ENCODE measurements at regions of chr1 and their contacts with region 1.

Region 1: DNA sequence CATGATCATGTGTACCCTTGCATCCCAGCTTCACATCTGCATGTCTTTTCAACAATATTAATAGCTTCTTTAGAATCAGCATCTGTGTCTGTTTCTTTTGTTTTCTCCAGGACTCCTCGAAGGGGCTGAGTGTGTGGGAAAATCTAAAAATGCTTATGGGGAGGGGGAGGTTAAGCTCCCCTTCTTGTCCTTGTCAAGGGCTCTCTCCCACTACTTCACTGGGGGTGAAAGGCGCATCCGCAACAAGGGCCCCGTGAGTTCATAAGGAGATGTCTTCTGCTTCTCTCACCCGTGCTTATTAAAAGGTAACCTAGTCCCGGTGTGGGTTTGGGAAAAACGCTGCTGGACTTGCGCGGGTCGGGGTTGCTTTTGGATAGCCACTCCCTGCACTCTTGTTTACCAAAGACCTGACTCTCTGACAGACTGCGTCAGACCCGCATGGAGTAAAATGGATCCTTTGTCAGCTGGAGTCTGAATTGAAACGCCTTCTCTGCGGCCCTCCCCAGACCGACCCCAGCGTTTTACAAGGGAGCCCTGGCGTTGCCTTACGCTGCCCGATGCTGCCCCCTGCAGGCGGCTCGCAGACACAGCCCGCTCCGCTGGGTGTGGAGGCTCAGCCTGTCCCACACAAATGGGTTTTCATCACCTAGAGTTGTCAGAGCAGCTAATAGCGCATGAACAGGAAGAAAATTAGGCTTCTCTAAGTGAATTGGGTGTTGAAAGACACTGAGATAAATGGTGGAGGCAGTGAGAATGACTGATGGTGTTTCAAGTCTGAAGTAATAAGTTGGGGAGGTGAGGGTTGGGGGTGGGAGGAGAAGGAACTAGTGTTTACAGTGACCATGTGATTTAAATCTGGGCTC is 53.8 kb downstream of the IER5 start:
- DNase-seq: peak; percentile 78 to 84 (median 81)
- H3K4me3 ChIP-seq: no peak overlapping the region
- H3K4me3 Mint-ChIP-seq: peak overlapping the region in 4 of 8 donors; percentile 4 to 26 (median 14)
- H3K27ac ChIP-seq: no peak overlapping the region
- H3K27ac Mint-ChIP-seq: peak overlapping the region in 4 of 7 donors; percentile 1 to 61 (median 33)
- H3K4me1 ChIP-seq: peaks cover 42% of the 10 kb centered on the region
- H3K4me1 Mint-ChIP-seq: peaks cover 19 to 51% (median 34%) of the 10 kb centered on the region in 4 donors
- H3K27me3 ChIP-seq: no peaks in the 10 kb centered on the region
- H3K27me3 Mint-ChIP-seq: peaks cover 0 to 2% of the 10 kb centered on the region in 2 donors

Region 2: GRCh38 chr1:180515864-180516388 is 626.4 kb before region 1 on chr1:
- CTCF ChIA-PET with region 1: interaction called, 5 read pairs
- POLR2A ChIA-PET with region 1: no interaction called
- intact Hi-C with region 1: loop called (anchors 5 kb)
- DNase-seq: peak; percentile 48 to 62 (median 55)
- H3K4me3 ChIP-seq: no peak overlapping the region
- H3K4me3 Mint-ChIP-seq: no peak overlapping the region
- H3K27ac ChIP-seq: no peak overlapping the region
- H3K27ac Mint-ChIP-seq: no peak overlapping the region
- H3K4me1 ChIP-seq: peaks cover 3% of the 10 kb centered on the region
- H3K4me1 Mint-ChIP-seq: peaks cover 0 to 2% (median 1%) of the 10 kb centered on the region in 4 donors
- H3K27me3 ChIP-seq: no peaks in the 10 kb centered on the region
- H3K27me3 Mint-ChIP-seq: peaks cover 4% of the 10 kb centered on the region in 2 donors

Region 3: DNA sequence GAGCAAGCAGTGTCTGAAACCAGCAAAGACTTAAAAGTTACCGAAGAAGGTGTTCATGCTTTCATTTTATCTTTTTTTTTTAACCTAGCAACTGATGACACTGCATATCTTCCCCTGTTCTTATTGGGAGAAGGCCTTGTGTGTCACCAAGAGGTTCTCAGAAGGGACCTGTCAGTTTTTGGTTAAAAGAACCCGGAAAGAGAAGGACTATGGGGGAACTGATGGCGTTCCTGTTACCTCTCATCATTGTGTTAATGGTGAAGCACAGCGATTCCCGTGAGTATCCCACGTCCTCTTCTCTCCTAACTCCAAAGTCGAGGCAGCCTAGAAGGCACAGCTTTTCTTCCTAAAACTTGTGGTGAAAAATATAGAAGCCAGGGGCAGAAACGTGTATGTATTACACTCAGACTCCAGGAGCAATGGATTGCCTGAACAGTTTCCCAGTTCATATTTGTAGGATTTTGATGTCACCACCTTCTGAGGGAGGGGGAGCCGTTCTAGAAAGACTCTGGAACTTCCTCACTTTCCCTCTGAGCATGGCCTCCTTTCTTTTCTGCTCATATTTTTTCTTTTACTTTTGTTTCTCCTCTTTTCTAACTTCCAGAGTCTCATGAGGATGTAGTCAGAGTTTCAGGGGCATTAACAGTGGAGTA is 108.4 kb before region 1 on chr1 and contains the start of gene MR1:
- CTCF ChIA-PET with region 1: interaction called, 99 read pairs
- POLR2A ChIA-PET with region 1: interaction called, 25 read pairs
- intact Hi-C with region 1: loop called (anchors 1 kb)
- DNase-seq: peak; percentile 72 to 91 (median 87)
- H3K4me3 ChIP-seq: peak within 1 kb of the TSS; percentile 63 to 72
- H3K4me3 Mint-ChIP-seq: peak within 1 kb of the TSS; percentile 93 to 99 (median 98)
- H3K27ac ChIP-seq: peak within 1 kb of the TSS; percentile 92
- H3K27ac Mint-ChIP-seq: peak within 1 kb of the TSS; percentile 95 to 100 (median 99)
- H3K4me1 ChIP-seq: peaks cover 56% of the 10 kb centered on the region
- H3K4me1 Mint-ChIP-seq: peaks cover 47 to 64% (median 54%) of the 10 kb centered on the region in 4 donors
- H3K27me3 ChIP-seq: no peaks in the 10 kb centered on the region
- H3K27me3 Mint-ChIP-seq: no peaks in the 10 kb centered on the region
- total RNA-seq, gene MR1: 31.8 to 33.2 TPM

Region 4: DNA sequence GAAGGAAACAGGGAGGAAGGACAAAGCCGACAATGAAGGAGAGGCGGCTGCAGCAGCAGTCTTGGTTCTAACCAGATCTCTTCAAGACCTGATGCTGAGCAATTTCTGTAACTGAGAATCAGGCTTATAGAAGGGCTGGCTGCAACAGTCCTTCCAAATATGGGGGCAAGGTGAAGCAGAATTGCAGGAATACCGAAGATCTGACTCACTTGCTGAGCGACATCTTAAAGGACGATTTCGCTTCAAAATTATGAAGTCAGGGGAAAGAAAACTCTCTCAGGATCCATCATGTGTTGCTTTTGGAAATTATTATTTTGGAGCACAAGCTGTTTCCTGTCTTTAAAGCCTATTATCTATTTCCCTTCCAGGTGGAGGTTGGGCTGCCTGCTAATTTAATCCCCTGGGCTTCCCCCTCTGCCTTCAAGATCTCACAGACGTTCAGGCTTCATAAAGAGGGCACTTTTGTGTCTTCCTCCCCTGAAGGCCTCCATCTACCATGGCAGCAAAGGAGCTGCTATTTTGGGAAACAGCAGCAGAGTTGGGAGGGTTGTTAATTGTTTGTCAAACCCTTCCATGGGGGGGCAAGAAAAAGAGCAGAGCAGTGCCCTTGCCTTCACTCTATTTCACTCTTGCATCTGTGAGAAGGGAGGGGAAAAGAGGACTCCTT is 64.6 kb before region 1 on chr1:
- CTCF ChIA-PET with region 1: interaction called, 311 read pairs
- POLR2A ChIA-PET with region 1: interaction called, 4 read pairs
- intact Hi-C with region 1: no loop called
- DNase-seq: no peak
- H3K4me3 ChIP-seq: no peak overlapping the region
- H3K4me3 Mint-ChIP-seq: no peak overlapping the region
- H3K27ac ChIP-seq: no peak overlapping the region
- H3K27ac Mint-ChIP-seq: no peak overlapping the region
- H3K4me1 ChIP-seq: no peaks in the 10 kb centered on the region
- H3K4me1 Mint-ChIP-seq: no peaks in the 10 kb centered on the region
- H3K27me3 ChIP-seq: no peaks in the 10 kb centered on the region
- H3K27me3 Mint-ChIP-seq: peaks cover 10 to 13% of the 10 kb centered on the region in 2 donors

Region 5: DNA sequence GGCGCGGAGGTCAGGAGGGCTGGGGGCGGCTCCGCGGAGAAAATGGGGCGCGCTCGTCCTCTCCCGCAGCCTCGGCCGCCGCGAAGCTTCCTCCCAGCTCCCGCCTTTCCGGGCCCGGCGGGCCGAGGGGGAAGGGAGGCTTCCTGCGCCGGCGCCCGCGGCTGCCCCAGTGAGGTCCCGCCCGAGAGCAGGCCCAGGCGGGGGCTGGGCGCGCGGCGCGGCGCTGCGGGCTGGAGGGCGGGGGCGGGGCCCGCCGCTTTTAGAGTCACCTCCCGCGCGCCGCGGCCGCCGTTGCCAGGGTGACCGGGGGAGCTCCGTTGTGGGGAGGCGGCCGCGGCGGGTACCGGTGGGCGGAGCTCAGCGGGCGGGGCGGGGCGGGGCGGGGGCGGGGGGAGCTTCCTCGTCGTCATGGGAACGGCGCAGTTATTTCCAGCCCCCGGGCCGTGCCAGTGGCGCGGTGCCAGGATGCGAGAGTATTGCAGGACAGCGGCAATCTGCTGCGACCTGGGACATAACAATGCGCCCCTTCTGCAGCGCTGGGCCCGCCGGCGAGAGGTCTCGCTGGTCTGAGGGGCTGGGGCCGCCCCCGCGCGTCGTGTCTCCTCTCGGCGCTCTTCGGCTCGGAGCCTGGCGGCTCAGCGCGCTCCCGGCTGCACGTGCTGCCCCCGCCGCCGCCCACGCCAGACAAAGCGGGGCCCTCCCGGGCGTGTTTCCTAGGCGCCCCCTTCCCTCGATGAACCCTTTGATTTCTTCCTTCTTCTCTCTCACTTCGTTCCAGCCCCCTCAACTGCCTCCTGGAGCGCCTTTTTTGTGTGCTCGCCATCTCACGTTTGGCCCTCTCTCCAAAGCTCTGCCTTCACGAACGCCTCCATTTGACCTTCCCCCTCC is 36.9 kb before region 1 on chr1:
- CTCF ChIA-PET with region 1: interaction called, 38 read pairs
- POLR2A ChIA-PET with region 1: interaction called, 31 read pairs
- intact Hi-C with region 1: loop called (anchors 2 kb)
- DNase-seq: peak; percentile 90 to 94 (median 91)
- H3K4me3 ChIP-seq: peak overlapping the region in 1 of 2 donors; percentile 76
- H3K4me3 Mint-ChIP-seq: peak overlapping the region; percentile 87 to 97 (median 90)
- H3K27ac ChIP-seq: peak overlapping the region; percentile 79
- H3K27ac Mint-ChIP-seq: peak overlapping the region; percentile 92 to 98 (median 96)
- H3K4me1 ChIP-seq: peaks cover 56% of the 10 kb centered on the region
- H3K4me1 Mint-ChIP-seq: peaks cover 33 to 71% (median 50%) of the 10 kb centered on the region in 4 donors
- H3K27me3 ChIP-seq: no peaks in the 10 kb centered on the region
- H3K27me3 Mint-ChIP-seq: no peaks in the 10 kb centered on the region

Region 6: DNA sequence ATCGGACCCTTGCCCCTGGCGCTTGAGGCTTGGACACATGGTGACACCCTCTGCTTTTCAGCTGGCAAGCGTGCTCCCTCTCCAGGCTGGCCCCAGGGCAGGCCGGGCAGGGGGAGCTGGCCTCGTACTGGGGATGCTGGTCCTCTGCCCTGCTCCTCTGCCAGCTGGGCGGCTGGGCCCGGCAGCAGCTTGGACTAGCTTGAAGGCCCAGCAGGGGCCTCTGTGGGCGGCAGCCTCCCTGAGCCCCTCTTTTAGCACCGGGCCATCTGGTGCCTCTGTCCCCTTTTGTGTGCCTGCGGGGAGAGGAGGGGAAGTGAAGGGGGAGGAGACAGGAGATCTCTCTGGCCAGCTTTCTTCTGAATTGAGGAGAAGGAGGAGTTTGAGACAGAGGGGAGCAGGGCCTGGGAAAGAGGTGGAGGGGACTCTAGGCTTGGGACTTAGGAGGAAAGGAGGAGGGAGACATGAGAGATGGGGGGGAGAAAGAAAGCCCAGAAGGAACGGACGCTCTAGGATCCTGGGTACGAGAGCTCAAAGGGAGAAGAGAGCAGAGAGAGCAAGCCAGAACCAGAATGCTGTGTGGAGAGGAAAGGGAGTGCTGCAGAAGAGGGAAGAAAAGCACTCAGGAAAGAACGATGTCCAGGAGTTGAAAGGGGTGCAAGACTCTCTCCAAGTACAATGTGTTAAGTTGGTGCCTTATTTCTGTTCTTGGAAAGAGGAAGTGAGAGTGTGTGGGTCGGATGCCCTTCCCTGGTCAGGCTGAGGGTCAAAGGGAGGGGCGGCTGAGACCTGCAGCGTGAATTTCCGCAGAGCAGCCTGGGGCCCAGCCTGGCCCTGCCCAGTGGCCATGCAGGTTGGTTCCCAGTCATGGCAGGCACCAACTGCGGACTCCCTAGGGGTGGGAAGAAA is 13.5 kb before region 1 on chr1:
- CTCF ChIA-PET with region 1: interaction called, 14 read pairs
- POLR2A ChIA-PET with region 1: no interaction called
- intact Hi-C with region 1: no loop called
- DNase-seq: no peak
- H3K4me3 ChIP-seq: no peak overlapping the region
- H3K4me3 Mint-ChIP-seq: no peak overlapping the region
- H3K27ac ChIP-seq: no peak overlapping the region
- H3K27ac Mint-ChIP-seq: no peak overlapping the region
- H3K4me1 ChIP-seq: peaks cover 2% of the 10 kb centered on the region
- H3K4me1 Mint-ChIP-seq: peaks cover 0 to 6% (median 3%) of the 10 kb centered on the region in 4 donors
- H3K27me3 ChIP-seq: no peaks in the 10 kb centered on the region
- H3K27me3 Mint-ChIP-seq: peaks cover 0 to 2% of the 10 kb centered on the region in 2 donors

Region 7: GRCh38 chr1:181397845-181398244 is 255.5 kb after region 1 on chr1:
- CTCF ChIA-PET with region 1: no interaction called
- POLR2A ChIA-PET with region 1: no interaction called
- intact Hi-C with region 1: no loop called
- DNase-seq: peak; percentile 41 to 56 (median 50)
- H3K4me3 ChIP-seq: peak overlapping the region; percentile 13 to 25
- H3K4me3 Mint-ChIP-seq: peak overlapping the region; percentile 65 to 86 (median 74)
- H3K27ac ChIP-seq: peak overlapping the region; percentile 37
- H3K27ac Mint-ChIP-seq: peak overlapping the region in 5 of 7 donors; percentile 78 to 97 (median 95)
- H3K4me1 ChIP-seq: peaks cover 64% of the 10 kb centered on the region
- H3K4me1 Mint-ChIP-seq: peaks cover 9 to 35% (median 29%) of the 10 kb centered on the region in 4 donors
- H3K27me3 ChIP-seq: no peaks in the 10 kb centered on the region
- H3K27me3 Mint-ChIP-seq: no peaks in the 10 kb centered on the region

Region 8: DNA sequence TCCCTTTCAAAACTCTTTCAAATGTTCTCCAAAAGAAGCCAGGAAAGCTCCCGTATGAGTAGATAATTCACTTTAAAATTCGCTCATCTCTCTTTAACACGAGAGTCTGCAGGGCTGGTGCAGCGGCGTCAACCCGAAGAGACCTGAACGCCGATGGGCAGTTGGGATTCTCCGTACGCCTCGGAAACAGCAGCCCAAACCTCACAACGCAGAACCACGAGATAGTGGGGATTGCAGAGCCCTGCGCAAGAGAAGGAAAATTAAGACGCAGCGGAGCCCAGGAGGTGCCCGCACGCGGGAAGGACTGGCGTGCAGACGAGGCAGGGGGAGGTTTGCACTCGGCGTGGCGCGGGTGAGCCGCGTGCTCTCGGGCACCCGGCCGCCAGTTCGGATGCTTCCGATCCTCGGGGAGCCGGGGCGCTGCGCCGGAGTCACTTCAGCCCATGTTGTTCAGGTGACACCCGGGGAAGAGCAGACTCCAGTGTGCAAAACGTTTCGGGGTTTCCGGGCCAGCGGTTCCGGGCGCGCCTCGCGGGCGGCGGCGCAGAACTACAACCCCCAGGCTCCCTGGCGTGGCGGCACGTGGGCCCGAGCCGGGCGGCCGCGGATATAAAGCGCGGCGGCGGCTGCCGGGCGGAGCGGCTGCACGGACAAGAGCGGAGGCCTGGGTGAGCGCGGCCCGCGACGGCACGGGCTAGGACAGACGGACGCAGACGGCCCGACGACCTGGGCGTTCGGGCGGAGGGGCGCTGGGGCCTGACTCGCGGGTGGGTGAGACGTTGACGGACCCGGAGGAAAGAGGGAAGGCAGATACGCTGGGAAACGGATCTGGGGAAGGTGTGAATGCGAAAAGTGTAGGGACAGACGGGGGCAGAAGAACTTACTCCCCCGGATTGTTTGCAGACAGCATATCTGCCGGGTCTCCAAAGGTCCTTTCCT is 1647.1 kb after region 1 on chr1 and contains the start of gene NPL:
- CTCF ChIA-PET with region 1: no interaction called
- POLR2A ChIA-PET with region 1: no interaction called
- intact Hi-C with region 1: no loop called
- DNase-seq: peak; percentile 86 to 89 (median 88)
- H3K4me3 ChIP-seq: peak within 1 kb of the TSS; percentile 69 to 88
- H3K4me3 Mint-ChIP-seq: peak within 1 kb of the TSS; percentile 89 to 94 (median 92)
- H3K27ac ChIP-seq: peak within 1 kb of the TSS; percentile 67
- H3K27ac Mint-ChIP-seq: peak within 1 kb of the TSS; percentile 78 to 92 (median 90)
- H3K4me1 ChIP-seq: peaks cover 13% of the 10 kb centered on the region
- H3K4me1 Mint-ChIP-seq: peaks cover 10 to 16% (median 11%) of the 10 kb centered on the region in 4 donors
- H3K27me3 ChIP-seq: no peaks in the 10 kb centered on the region
- H3K27me3 Mint-ChIP-seq: no peaks in the 10 kb centered on the region
- total RNA-seq, gene NPL: 9.6 TPM